ENCODE measurements at regions of chr14 and their contacts with region 1.

Region 1: DNA sequence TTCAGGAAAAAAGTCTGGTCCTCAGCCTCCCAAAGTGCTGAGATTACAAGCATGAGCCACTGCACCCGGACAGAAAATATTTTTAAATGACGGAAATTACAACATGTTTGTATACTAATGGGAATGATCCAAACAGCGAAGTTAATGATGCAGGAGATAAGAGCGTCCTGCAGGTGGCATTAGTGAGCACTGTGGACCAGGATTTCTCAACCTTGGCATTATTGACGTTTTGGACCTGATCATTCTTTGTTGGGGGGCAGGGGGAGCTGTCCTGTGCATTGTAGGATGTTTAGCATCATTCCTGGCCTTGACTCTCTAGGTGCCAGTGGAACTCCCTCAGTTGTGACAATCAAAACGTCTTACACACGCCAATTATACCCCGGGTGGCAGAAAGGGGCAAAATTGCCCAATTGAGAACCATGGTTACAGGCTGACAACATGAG is 34.1 kb downstream of the SCFD1 start:
- DNase-seq: peak in 1 of 2 experiments; percentile 38
- H3K4me3 ChIP-seq: no peak overlapping the region
- H3K4me3 Mint-ChIP-seq: no peak overlapping the region
- H3K27ac Mint-ChIP-seq: no peak overlapping the region
- H3K4me1 ChIP-seq: no peaks in the 10 kb centered on the region
- H3K4me1 Mint-ChIP-seq: no peaks in the 10 kb centered on the region
- H3K27me3 ChIP-seq: no peaks in the 10 kb centered on the region
- H3K27me3 Mint-ChIP-seq: no peaks in the 10 kb centered on the region
- CTCF ChIP-seq: peak; percentile 64 to 73

Region 2: DNA sequence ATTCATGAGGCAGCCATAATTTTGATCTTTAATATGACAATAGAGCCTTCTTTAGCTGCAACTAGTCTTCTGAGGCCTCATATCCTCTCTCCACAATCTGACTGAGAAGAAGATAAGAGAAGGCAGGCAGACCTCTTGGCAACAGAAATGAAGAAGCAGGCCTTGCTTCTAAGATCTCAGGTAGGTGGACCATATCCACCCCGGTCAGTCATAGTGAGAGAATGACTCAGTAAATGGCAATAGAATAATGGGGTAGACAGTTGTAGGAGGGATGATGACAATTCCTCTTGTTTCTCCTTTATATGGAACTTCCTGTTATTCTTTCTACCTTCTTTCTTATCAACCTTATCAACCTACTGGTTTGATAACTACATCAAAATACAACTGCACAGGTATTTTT is 344.0 kb before region 1 on chr14:
- CTCF ChIA-PET with region 1: no interaction called
- POLR2A ChIA-PET with region 1: no interaction called
- intact Hi-C with region 1: no loop called
- DNase-seq: no peak
- H3K4me3 ChIP-seq: no peak overlapping the region
- H3K4me3 Mint-ChIP-seq: no peak overlapping the region
- H3K27ac Mint-ChIP-seq: no peak overlapping the region
- H3K4me1 ChIP-seq: no peaks in the 10 kb centered on the region
- H3K4me1 Mint-ChIP-seq: no peaks in the 10 kb centered on the region
- H3K27me3 ChIP-seq: no peaks in the 10 kb centered on the region
- H3K27me3 Mint-ChIP-seq: peaks cover 9% of the 10 kb centered on the region
- CTCF ChIP-seq: no peak

Region 3: GRCh38 chr14:30756596-30756995 is 100.4 kb after region 1 on chr14:
- CTCF ChIA-PET with region 1: no interaction called
- POLR2A ChIA-PET with region 1: no interaction called
- intact Hi-C with region 1: loop called (anchors 2 kb)
- DNase-seq: no peak
- H3K4me3 ChIP-seq: no peak overlapping the region
- H3K4me3 Mint-ChIP-seq: no peak overlapping the region
- H3K27ac Mint-ChIP-seq: no peak overlapping the region
- H3K4me1 ChIP-seq: no peaks in the 10 kb centered on the region
- H3K4me1 Mint-ChIP-seq: no peaks in the 10 kb centered on the region
- H3K27me3 ChIP-seq: no peaks in the 10 kb centered on the region; the same call in 1 of the 2 replicates
- H3K27me3 Mint-ChIP-seq: peaks cover 3% of the 10 kb centered on the region
- CTCF ChIP-seq: no peak

Region 4: DNA sequence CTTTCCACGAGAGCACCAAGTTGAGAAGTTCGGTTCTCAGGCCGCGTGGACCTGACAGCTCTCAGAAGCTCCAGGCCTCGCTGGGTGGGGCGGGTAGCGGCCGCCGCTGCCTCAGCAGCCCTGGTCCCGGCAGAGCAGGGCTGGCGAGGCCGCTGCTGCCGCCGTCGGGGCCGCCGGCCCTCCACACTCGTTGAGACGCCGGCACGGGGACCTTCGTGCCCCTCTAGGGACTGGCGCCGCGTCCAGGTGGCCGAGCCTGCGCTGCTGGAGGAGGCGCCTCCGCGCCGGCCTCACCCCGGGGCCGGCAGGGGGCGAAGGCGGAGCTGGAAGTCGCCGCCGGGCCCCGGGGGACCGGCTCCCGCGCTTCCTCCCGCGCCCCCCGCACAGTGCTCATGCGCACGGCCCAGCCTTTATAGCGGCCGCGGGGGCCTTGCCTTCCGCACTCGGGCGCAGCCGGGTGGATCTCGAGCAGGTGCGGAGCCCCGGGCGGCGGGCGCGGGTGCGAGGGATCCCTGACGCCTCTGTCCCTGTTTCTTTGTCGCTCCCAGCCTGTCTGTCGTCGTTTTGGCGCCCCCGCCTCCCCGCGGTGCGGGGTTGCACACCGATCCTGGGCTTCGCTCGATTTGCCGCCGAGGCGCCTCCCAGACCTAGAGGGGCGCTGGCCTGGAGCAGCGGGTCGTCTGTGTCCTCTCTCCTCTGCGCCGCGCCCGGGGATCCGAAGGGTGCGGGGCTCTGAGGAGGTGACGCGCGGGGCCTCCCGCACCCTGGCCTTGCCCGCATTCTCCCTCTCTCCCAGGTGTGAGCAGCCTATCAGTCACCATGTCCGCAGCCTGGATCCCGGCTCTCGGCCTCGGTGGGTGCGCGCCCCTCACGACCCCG is 218.1 kb after region 1 on chr14 and contains the start of gene COCH:
- CTCF ChIA-PET with region 1: no interaction called
- POLR2A ChIA-PET with region 1: no interaction called
- intact Hi-C with region 1: loop called (anchors 10 kb)
- DNase-seq: peak; percentile 69 to 82
- H3K4me3 ChIP-seq: peak within 1 kb of the TSS; percentile 90
- H3K4me3 Mint-ChIP-seq: peak within 1 kb of the TSS; percentile 89
- H3K27ac Mint-ChIP-seq: no peak within 1 kb of the TSS
- H3K4me1 ChIP-seq: no peaks in the 10 kb centered on the region
- H3K4me1 Mint-ChIP-seq: no peaks in the 10 kb centered on the region
- H3K27me3 ChIP-seq: no peaks in the 10 kb centered on the region
- H3K27me3 Mint-ChIP-seq: no peaks in the 10 kb centered on the region
- CTCF ChIP-seq: peak; percentile 33 to 59
- total RNA-seq, gene COCH: 32.2 and 33.4 TPM in 2 replicates

Region 5: DNA sequence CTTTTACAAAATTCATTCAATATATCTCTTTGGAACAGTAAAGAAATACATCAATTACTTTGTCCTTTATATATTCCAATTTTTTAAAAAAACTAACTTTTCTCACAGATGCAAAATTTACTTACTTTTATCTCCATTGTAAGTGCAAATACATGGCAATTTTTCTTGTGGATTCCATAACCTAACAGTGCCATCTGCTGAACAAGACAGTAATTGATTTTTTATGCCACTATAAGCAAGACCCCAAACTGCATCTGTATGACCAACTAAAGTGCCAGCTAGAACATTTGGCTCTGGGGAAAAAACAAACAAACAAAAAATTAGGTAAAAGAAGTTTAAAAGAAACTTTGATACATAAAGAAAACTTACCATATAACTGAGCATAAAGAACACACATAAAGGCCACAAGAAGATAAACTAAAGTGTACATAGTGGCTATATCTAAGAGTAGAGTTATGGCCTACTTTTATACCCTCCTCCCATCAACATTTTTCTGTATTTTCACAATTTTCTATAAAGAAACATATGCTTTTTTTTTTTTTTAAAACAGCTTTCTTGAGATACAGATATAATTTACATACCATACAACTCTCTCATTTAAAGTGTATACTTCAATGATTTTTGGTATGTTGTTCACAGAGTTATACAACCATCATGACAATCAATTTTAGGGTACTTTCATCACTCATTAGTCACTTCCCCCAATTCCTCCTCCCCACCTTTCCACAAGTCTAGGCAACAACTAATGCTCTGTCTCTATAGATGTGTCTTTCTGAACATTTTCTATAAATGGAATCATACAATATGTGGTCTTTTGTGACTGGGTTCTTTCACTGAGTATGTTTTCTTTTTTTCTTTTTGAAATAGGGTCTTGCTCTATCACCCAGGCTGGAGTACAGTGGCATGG is 250.8 kb after region 1 on chr14:
- CTCF ChIA-PET with region 1: interaction called, 3 read pairs
- POLR2A ChIA-PET with region 1: no interaction called
- intact Hi-C with region 1: loop called (anchors 2 kb)
- DNase-seq: no peak
- H3K4me3 ChIP-seq: no peak overlapping the region
- H3K4me3 Mint-ChIP-seq: no peak overlapping the region
- H3K27ac Mint-ChIP-seq: no peak overlapping the region
- H3K4me1 ChIP-seq: no peaks in the 10 kb centered on the region
- H3K4me1 Mint-ChIP-seq: no peaks in the 10 kb centered on the region
- H3K27me3 ChIP-seq: no peaks in the 10 kb centered on the region
- H3K27me3 Mint-ChIP-seq: no peaks in the 10 kb centered on the region
- CTCF ChIP-seq: no peak

Measured in Caco-2 (cell line).